AG04450 (cell line): ENCODE measurements at regions of chr5 and their contacts with region 1.

Region 1: DNA sequence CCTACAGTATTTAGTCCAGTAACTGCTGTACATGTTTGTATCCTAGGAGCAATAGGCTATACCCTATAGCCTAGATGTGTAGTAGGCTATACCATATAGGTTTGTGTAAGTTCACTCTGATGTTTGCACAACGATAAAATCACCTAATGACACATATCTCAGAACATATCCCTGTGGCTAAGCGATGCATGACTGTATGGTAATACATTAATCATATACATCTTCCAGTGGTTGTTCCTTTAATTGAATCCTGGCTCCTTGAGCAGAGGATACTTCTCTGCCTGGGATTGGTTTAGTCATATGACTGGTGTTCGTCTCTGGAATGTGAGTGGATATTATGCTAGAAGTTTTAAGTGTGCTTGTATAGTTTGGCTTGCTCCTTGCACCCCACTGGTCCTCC is 425.8 kb downstream of the MAN2A1 start:
- DNase-seq: no peak
- H3K4me3 ChIP-seq: no peak overlapping the region
- H3K27ac ChIP-seq: no peak overlapping the region
- H3K27me3 ChIP-seq: no peaks in the 10 kb centered on the region
- CTCF ChIP-seq: no peak

Region 2: GRCh38 chr5:110478895-110479294 is 363.4 kb after region 1 on chr5:
- CTCF ChIA-PET with region 1: interaction called, 10 read pairs
- POLR2A ChIA-PET with region 1: no interaction called
- DNase-seq: peak; percentile 7
- H3K4me3 ChIP-seq: no peak overlapping the region
- H3K27ac ChIP-seq: no peak overlapping the region
- H3K27me3 ChIP-seq: no peaks in the 10 kb centered on the region
- CTCF ChIP-seq: no peak